ENCODE measurements at regions of chr12 and their contacts with region 1.

Region 1: GRCh38 chr12:132414634-132415326 is 75.2 kb upstream of the FBRSL1 start:
- DNase-seq: no peak
- H3K4me3 ChIP-seq: peak overlapping the region in 1 of 4 donors; percentile 10
- H3K27ac ChIP-seq: no peak overlapping the region
- H3K4me1 ChIP-seq: peaks cover 5 to 12% (median 6%) of the 10 kb centered on the region in 3 donors
- H3K27me3 ChIP-seq: peaks cover 0 to 75% (median 1%) of the 10 kb centered on the region in 4 donors
- CTCF ChIP-seq: peak; percentile 75 to 94 (median 88)
- POLR2A ChIP-seq: no peak

Region 2: DNA sequence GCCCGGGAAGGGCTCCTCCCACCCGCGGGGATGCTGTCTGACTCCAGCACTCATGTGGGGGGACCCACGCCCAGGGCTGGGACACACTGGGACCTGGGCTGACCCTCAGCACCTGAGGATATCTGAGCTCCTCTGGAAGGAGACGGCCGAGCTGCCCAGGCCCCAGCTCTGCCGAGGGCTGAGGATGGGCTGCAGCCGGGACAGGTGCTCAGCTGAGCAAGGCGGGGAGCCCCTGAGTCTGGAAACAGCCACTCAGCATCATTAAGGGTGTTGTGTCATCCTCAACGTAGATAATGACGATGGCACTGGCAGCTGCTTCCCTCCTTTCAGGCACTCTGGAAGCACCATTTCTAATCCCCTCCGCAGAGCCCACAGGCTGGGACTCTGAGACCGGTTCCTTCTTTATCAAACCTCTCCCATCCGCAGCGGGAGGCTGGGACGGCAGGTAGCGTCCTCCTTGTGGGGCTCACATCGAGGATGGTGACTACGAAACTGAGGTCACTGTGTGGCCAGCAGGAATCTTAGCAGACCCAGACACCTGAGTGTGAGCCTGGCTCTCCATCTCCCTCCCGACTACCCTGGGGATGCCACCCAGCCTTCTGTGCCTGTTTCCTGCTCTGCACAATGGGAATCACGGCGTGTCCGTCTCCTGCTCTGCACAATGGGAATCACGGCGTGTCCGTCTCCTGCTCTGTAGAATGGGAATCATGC is 730.6 kb before region 1 on chr12:
- intact Hi-C with region 1: no loop called
- DNase-seq: no peak
- H3K4me3 ChIP-seq: no peak overlapping the region
- H3K27ac ChIP-seq: no peak overlapping the region
- H3K4me1 ChIP-seq: peaks cover 0 to 21% (median 0%) of the 10 kb centered on the region in 3 donors
- H3K27me3 ChIP-seq: peaks cover 0 to 23% (median 0%) of the 10 kb centered on the region in 4 donors
- CTCF ChIP-seq: no peak
- POLR2A ChIP-seq: no peak

Region 3: DNA sequence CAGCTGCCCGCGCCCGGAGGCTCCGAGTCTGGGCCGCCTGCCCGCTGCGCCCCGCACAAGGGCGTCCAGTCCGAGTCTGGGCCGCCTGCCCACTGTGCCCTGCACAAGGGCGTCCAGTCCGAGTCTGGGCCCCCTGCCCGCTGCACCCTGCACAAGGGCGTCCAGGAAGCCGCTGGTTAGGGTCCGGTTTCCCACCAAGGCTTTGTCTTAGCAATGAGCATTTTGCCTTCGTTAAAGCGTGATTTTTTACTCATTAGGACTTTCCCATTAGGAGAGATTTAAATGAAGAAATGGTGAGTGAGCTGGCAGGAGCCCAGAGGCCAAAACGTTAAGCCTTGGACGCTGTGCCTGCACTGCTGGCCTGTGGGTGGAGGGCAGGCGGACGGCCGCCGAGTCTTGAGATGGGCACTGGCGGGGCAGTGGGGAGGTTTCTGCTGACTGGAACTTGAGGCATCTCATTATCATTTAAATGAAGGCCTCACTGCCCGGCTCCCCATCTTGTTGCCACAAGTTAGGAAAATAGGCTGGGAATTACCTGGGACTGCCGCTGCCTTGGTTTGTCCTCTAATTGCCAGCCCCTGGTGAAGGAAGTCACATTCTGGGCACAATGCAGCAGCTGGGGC is 111.2 kb after region 1 on chr12:
- intact Hi-C with region 1: loop called (anchors 5 kb)
- DNase-seq: no peak
- H3K4me3 ChIP-seq: no peak overlapping the region
- H3K27ac ChIP-seq: no peak overlapping the region
- H3K4me1 ChIP-seq: peaks cover 17 to 48% (median 21%) of the 10 kb centered on the region in 3 donors
- H3K27me3 ChIP-seq: peaks cover 0 to 14% (median 0%) of the 10 kb centered on the region in 4 donors
- CTCF ChIP-seq: no peak
- POLR2A ChIP-seq: no peak

Region 4: GRCh38 chr12:132614861-132615578 is 200.2 kb after region 1 on chr12:
- intact Hi-C with region 1: loop called (anchors 5 kb)
- DNase-seq: no peak
- H3K4me3 ChIP-seq: no peak overlapping the region
- H3K27ac ChIP-seq: no peak overlapping the region
- H3K4me1 ChIP-seq: peaks cover 8 to 40% (median 8%) of the 10 kb centered on the region in 3 donors
- H3K27me3 ChIP-seq: peaks cover 4 to 76% (median 28%) of the 10 kb centered on the region in 4 donors
- CTCF ChIP-seq: peak; percentile 82 to 91 (median 86)
- POLR2A ChIP-seq: no peak

Measured in esophagus squamous epithelium (tissue), 5 donors.